Activated CD4-positive, alpha-beta T cell treated with anti-CD3 and anti-CD28 coated beads for 36 hours (primary cell): ENCODE measurements at regions of chr3 and their contacts with region 1.

Region 1: GRCh38 chr3:113575206-113575605 is 42.9 kb downstream of the SIDT1 start:
- DNase-seq: no peak
- ATAC-seq: no peak
- H3K4me3 Mint-ChIP-seq: no peak overlapping the region
- H3K27ac Mint-ChIP-seq: no peak overlapping the region
- H3K4me1 Mint-ChIP-seq: peaks cover 8% of the 10 kb centered on the region
- H3K27me3 Mint-ChIP-seq: no peaks in the 10 kb centered on the region

Region 2: GRCh38 chr3:113051302-113051711 is 523.9 kb before region 1 on chr3:
- CTCF ChIA-PET with region 1: interaction called, 7 read pairs
- POLR2A ChIA-PET with region 1: no interaction called
- intact Hi-C with region 1: loop called (anchors 1 to 5 kb)
- DNase-seq: peak; percentile 92
- ATAC-seq: peak; percentile 95
- H3K4me3 Mint-ChIP-seq: no peak overlapping the region
- H3K27ac Mint-ChIP-seq: no peak overlapping the region
- H3K4me1 Mint-ChIP-seq: peaks cover 2% of the 10 kb centered on the region
- H3K27me3 Mint-ChIP-seq: no peaks in the 10 kb centered on the region

Region 3: GRCh38 chr3:113485161-113485609 is 90.0 kb before region 1 on chr3:
- CTCF ChIA-PET with region 1: interaction called, 13 read pairs
- POLR2A ChIA-PET with region 1: no interaction called
- intact Hi-C with region 1: no loop called
- DNase-seq: peak; percentile 24
- ATAC-seq: peak; percentile 30
- H3K4me3 Mint-ChIP-seq: no peak overlapping the region
- H3K27ac Mint-ChIP-seq: no peak overlapping the region
- H3K4me1 Mint-ChIP-seq: peaks cover 10% of the 10 kb centered on the region
- H3K27me3 Mint-ChIP-seq: no peaks in the 10 kb centered on the region

Region 4: GRCh38 chr3:113514265-113514769 is 60.9 kb before region 1 on chr3:
- CTCF ChIA-PET with region 1: interaction called, 23 read pairs
- POLR2A ChIA-PET with region 1: interaction called, 3 read pairs
- intact Hi-C with region 1: loop called in 1 of 2 experiments (anchors 5 kb)
- DNase-seq: no peak
- ATAC-seq: peak; percentile 30
- H3K4me3 Mint-ChIP-seq: no peak overlapping the region
- H3K27ac Mint-ChIP-seq: no peak overlapping the region
- H3K4me1 Mint-ChIP-seq: peaks cover 10% of the 10 kb centered on the region
- H3K27me3 Mint-ChIP-seq: peaks cover 6% of the 10 kb centered on the region

Region 5: DNA sequence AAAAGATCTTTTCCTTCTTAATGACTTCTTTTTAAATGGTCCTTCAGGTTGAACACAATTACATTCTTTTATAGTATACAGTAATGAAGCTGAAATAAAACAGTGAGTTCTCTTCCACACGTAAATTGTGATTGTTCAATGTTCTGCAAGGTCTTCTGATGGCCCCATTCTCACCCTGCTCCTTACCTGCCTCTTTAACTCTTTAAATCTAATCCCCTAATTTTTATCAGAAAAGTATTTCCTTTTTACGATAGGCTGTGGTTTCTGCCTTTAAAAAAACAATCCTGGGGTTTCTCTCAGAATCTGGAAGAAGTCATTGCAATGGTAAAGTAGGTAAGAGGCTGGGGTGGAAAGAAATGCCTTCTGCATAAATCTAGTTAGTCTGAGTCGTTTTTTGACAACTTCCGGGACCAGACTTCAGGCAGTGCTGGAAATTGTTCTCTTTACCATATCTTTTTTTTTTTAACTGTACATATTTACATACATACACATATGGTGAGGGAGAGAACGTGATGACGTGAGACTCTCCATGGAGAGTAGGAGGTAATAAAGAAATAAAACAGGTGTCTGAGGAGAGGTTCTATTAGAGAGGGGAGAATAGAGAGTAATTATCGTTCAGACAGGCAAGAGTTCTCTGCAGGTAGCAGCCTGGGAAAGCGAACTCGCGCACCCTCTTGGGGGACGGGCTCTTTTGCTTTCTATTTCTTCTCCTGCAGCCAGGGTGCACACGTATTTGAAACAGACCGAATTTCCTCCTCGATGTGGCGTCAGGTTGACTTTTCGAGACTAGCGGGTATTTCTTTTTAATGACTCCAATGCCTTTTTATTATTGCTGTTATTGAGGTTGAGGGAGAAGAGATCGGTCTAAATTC is 43.1 kb before region 1 on chr3 and contains the start of gene SIDT1:
- CTCF ChIA-PET with region 1: interaction called, 12 read pairs
- POLR2A ChIA-PET with region 1: interaction called, 3 read pairs
- intact Hi-C with region 1: loop called (anchors 1 to 2 kb)
- DNase-seq: peak; percentile 85
- ATAC-seq: peak; percentile 78
- H3K4me3 Mint-ChIP-seq: peak within 1 kb of the TSS; percentile 89
- H3K27ac Mint-ChIP-seq: peak within 1 kb of the TSS; percentile 96
- H3K4me1 Mint-ChIP-seq: peaks cover 49% of the 10 kb centered on the region
- H3K27me3 Mint-ChIP-seq: no peaks in the 10 kb centered on the region
- total RNA-seq, gene SIDT1: 19.0 to 19.7 TPM

Region 6: DNA sequence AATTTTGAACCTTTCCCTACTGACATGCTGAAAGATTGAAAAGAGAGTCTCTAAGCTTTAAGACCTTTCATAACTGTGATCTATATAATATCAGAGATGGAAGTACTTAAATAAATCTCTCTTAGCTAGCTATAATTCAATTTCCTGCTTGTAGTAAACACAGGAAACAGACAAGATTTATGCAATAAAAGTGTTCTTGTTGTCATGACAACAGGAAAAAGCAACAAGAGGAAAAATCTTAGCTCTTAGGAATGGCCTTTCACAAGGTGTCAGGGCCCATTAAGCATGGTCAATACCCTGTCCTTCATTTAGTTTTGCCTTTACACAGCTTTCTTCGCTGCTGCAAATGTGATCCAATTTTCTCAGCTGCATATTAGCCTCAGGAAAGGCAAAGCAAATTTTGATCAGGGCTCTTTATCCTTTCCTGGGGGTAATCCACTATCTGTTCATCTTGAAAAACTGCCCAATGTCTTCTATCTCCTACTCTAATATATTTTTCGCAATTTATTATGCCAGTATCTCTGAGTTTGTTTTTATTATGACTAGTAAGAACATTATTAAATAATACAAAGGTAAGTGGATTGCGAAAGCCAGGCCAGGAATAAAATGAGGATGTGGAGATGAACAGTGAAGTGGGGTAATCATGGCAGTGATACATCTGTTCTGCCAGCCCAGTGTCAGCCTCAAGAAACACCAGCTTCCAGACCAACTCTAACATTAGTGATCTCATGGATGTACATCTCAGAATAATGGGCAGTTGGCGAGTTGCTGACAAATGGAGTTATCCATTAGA is 14.2 kb before region 1 on chr3:
- CTCF ChIA-PET with region 1: interaction called, 20 read pairs
- POLR2A ChIA-PET with region 1: no interaction called
- intact Hi-C with region 1: no loop called
- DNase-seq: no peak
- ATAC-seq: no peak
- H3K4me3 Mint-ChIP-seq: no peak overlapping the region
- H3K27ac Mint-ChIP-seq: no peak overlapping the region
- H3K4me1 Mint-ChIP-seq: peaks cover 41% of the 10 kb centered on the region
- H3K27me3 Mint-ChIP-seq: no peaks in the 10 kb centered on the region

Region 7: GRCh38 chr3:113589971-113590370 is 14.8 kb after region 1 on chr3:
- CTCF ChIA-PET with region 1: interaction called, 15 read pairs
- POLR2A ChIA-PET with region 1: no interaction called
- intact Hi-C with region 1: no loop called
- DNase-seq: no peak
- ATAC-seq: no peak
- H3K4me3 Mint-ChIP-seq: no peak overlapping the region
- H3K27ac Mint-ChIP-seq: no peak overlapping the region
- H3K4me1 Mint-ChIP-seq: peaks cover 12% of the 10 kb centered on the region
- H3K27me3 Mint-ChIP-seq: no peaks in the 10 kb centered on the region